ENCODE measurements at regions of chr12 and their contacts with region 1.

Region 1: DNA sequence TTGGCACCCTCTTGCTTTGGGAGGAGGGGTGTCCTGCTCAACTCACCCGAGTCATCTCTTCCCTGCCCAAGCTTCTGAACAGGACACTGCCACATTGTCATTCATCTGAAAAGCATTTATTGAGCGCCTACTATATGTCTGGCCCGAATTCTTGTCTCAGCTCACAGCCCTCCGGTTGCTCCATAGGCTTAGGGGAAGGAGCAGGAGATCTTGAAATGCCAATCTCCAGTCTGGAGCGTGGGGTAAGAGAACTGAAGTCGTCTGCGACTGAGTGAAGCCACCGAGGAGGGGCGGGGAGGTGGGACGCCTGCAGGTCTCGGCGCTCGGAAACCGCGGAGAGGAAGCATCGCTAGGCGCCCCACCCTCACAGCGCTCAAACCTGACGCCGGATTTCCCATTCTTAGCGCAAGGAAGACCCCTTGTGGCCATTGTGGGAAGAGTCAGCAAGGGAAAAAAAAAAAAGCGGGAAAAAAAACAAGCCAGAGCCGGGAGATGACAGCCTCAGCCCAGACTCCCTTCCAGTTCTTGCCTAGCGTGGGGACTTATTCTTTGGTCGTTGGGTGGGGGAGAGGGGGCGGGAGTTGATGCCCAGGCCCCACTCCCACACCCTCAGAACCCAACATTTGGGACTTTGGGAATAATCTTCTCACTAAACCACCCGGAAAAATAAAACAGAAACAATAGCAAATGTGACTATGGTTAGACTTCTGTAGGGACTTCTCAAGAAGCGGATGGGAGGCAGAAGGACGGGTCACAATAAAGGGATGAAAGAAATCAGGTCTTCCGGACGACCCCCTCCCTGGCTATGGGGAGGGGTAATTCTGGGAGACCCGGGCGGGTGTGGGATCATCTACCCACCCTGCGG is 28.2 kb upstream of the SMUG1 start:
- DNase-seq: peak; percentile 62 to 74
- H3K4me3 ChIP-seq: peak overlapping the region; percentile 49; the same call in 1 of the 2 replicates
- H3K27ac ChIP-seq: no peak overlapping the region
- H3K4me1 ChIP-seq: peaks cover 4% of the 10 kb centered on the region
- H3K27me3 ChIP-seq: no peaks in the 10 kb centered on the region
- CTCF ChIP-seq: peak; percentile 89

Region 2: DNA sequence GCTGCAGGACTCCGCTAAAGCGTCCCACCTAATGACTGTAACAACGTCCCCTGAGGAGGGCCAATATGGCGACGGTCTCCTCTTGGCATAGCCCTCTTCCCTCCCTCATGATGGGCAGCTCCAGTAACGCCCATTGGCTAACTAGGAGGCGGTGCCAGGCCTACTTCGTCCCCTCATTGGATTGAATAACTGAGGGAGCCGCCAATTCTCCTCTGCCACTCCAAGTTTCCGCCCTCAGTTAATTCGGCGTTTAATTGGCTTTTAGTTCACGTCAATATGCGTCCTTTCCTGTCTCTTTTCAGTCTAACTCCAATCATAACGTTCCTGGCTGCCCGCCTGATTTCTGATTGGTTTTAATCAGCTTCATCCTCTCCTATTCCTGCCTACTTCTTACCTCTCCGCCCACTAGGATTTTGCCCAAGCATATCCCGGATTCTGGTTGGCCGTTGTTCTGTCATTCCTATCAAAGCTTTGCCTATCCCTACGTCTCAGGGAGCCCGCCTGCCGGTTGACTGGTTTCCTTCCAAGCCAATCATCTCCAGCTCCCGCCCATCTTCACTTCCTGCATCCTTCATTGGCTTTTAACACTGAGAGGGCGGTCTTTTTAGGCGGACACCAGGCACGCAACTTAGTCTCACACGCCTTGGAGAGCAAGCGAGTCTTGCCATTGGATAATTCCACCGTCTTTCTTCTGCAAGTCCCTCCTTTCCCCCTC is 837.5 kb before region 1 on chr12:
- CTCF ChIA-PET with region 1: interaction called, 21 read pairs
- POLR2A ChIA-PET with region 1: no interaction called
- intact Hi-C with region 1: no loop called
- DNase-seq: peak; percentile 98 to 100
- H3K4me3 ChIP-seq: peak overlapping the region; percentile 76
- H3K27ac ChIP-seq: peak overlapping the region; percentile 83
- H3K4me1 ChIP-seq: peaks cover 40% of the 10 kb centered on the region
- H3K27me3 ChIP-seq: no peaks in the 10 kb centered on the region
- CTCF ChIP-seq: no peak

Region 3: DNA sequence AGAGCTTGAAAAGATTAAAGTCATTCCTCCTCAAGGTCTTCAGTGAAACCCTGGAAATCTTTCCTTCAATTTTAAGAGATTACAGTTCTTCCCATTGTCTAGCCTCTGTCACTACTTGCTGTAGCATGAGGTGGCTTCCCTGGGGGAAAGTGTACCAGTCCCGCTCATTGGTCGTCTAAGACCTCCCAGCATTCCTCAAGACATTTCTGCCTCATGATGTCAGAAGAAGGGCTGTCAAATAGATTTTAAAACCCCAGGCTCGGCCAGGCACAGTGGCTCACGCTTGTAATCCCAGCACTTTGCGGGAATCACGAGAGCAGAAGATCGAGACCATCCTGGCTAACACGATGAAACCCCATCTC is 74.9 kb before region 1 on chr12:
- CTCF ChIA-PET with region 1: no interaction called
- POLR2A ChIA-PET with region 1: no interaction called
- intact Hi-C with region 1: no loop called
- DNase-seq: no peak
- H3K4me3 ChIP-seq: no peak overlapping the region
- H3K27ac ChIP-seq: no peak overlapping the region
- H3K4me1 ChIP-seq: no peaks in the 10 kb centered on the region
- H3K27me3 ChIP-seq: peaks cover 17% of the 10 kb centered on the region
- CTCF ChIP-seq: no peak

Region 4: GRCh38 chr12:54184415-54184805 is 32.6 kb before region 1 on chr12:
- CTCF ChIA-PET with region 1: no interaction called
- POLR2A ChIA-PET with region 1: interaction called, 11 read pairs
- intact Hi-C with region 1: no loop called
- DNase-seq: no peak
- H3K4me3 ChIP-seq: no peak overlapping the region
- H3K27ac ChIP-seq: no peak overlapping the region
- H3K4me1 ChIP-seq: peaks cover 18% of the 10 kb centered on the region
- H3K27me3 ChIP-seq: no peaks in the 10 kb centered on the region
- CTCF ChIP-seq: no peak

Region 5: DNA sequence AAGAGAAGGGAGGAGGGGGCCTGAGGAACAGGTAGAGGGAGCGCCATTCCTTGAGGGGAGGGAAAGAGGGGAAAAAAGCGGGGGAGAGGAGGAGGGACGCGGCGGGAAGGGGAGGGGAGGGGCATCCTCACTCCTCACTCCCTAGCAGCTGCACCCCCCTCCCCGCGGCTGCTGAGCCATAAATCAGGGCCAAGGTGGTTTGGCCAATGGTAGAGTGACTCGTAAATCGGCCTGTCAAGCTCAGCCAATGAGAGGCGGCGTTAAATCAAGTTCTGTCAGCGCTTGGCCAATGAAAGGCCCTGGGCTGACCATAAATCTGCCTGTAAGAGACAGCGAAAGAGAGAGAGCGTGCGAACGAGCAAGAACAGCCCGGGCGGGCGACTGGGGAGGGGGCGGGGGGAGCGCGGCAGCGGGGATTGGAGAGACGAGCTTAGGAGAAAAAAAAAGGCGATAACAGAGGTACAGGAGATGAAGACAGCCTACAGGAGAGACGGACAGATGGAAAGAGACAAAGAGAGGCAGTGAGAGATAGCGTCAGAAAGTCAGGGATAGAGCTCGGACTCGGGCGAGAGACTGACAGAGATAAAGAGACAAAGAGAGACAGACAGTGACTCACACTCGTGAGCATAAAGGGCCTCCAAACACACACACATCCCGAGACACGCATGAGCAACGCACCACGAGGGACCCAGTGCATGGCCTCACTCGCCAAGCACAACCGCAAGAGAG is 142.2 kb after region 1 on chr12:
- CTCF ChIA-PET with region 1: interaction called, 3 read pairs
- POLR2A ChIA-PET with region 1: interaction called, 3 read pairs
- intact Hi-C with region 1: loop called (anchors 1 kb)
- DNase-seq: peak; percentile 94 to 98
- H3K4me3 ChIP-seq: peak overlapping the region; percentile 85
- H3K27ac ChIP-seq: peak overlapping the region; percentile 28; the same call in 1 of the 2 replicates
- H3K4me1 ChIP-seq: peaks cover 14% of the 10 kb centered on the region
- H3K27me3 ChIP-seq: no peaks in the 10 kb centered on the region
- CTCF ChIP-seq: no peak

Region 6: GRCh38 chr12:54368709-54369583 is 151.9 kb after region 1 on chr12:
- CTCF ChIA-PET with region 1: no interaction called
- POLR2A ChIA-PET with region 1: no interaction called
- intact Hi-C with region 1: loop called (anchors 1 kb)
- DNase-seq: peak; percentile 72 to 84
- H3K4me3 ChIP-seq: no peak overlapping the region
- H3K27ac ChIP-seq: no peak overlapping the region
- H3K4me1 ChIP-seq: peaks cover 13% of the 10 kb centered on the region
- H3K27me3 ChIP-seq: no peaks in the 10 kb centered on the region
- CTCF ChIP-seq: peak; percentile 93

Region 7: DNA sequence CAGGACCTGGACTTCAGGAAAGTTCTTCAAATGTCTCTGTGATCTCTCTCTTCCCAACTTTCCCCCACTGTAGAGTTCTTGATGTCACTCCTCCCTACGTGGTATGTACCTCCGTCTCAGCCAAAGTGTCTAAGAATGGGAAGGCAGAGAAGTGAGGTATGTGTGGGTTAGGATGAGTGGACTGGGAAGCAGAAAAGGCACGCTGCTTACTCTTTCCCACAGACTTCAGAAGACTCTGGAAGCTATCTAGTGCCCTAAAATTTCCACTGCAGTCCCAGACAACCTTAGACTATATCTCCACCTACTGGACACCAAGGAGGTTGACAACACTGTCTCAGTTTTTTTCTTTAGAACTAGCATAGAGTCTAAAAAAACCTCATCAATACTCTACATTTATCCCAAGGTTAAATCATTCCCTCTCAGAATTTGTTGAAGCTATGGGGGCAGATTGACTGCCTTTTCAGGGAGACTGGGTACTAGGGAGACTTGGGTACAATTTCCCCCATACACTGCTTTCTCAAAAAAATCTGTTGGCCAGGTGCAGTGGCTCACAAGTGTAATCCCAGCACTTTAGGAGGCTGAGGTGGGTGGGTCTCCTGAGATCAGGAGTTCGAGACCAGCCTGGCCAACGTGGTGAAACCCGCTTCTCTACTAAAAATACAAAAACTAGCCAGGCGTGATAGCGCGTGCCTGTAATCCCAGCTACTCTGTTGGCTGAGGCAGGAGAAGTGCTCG is 222.7 kb after region 1 on chr12:
- CTCF ChIA-PET with region 1: no interaction called
- POLR2A ChIA-PET with region 1: no interaction called
- intact Hi-C with region 1: loop called (anchors 5 kb)
- DNase-seq: peak in 1 of 2 experiments; percentile 55
- H3K4me3 ChIP-seq: no peak overlapping the region
- H3K27ac ChIP-seq: no peak overlapping the region
- H3K4me1 ChIP-seq: 0 out of 2 replicates have a peak, but pooled peaks cover 8% of the 10 kb centered on the region
- H3K27me3 ChIP-seq: no peaks in the 10 kb centered on the region
- CTCF ChIP-seq: peak; percentile 85

Measured in PC-9 (cell line).